Heart right ventricle (tissue), 16 donors: ENCODE measurements at regions of chr15 and their contacts with region 1.

Region 1: DNA sequence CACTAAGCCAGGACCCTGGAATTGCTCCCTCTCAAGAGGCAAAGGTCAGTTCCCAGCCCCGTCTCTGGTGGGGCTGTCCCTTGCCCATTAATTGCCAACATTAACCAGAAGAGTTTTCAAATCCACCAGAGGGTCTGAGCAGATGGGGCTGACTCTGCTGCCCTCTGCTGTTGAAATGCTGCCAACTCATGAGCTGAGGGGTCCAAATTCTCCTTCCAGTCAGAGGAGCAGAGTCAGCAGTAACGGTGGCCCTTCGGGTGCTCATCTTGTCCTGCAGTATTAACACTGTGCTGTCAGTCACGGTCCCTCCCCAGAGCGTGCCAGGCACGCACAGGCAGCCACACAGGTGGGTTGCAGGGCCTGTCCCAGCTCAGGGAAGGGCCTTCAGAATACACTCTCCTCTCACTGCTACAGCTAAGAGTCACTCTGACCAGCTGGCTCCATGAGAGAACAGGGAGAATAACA is 10.7 kb upstream of the SPTBN5 start:
- DNase-seq: peak in 1 of 2 donors; percentile 70
- ATAC-seq: peak; percentile 56 to 79 (median 69)
- H3K4me3 ChIP-seq: no peak overlapping the region
- H3K27ac ChIP-seq: peak overlapping the region in 9 of 10 donors; percentile 9 to 70 (median 48)
- H3K4me1 ChIP-seq: peaks cover 3 to 50% (median 37%) of the 10 kb centered on the region in 9 donors
- H3K27me3 ChIP-seq: no peaks in the 10 kb centered on the region
- CTCF ChIP-seq: peak; percentile 68 to 88 (median 85)

Region 2: DNA sequence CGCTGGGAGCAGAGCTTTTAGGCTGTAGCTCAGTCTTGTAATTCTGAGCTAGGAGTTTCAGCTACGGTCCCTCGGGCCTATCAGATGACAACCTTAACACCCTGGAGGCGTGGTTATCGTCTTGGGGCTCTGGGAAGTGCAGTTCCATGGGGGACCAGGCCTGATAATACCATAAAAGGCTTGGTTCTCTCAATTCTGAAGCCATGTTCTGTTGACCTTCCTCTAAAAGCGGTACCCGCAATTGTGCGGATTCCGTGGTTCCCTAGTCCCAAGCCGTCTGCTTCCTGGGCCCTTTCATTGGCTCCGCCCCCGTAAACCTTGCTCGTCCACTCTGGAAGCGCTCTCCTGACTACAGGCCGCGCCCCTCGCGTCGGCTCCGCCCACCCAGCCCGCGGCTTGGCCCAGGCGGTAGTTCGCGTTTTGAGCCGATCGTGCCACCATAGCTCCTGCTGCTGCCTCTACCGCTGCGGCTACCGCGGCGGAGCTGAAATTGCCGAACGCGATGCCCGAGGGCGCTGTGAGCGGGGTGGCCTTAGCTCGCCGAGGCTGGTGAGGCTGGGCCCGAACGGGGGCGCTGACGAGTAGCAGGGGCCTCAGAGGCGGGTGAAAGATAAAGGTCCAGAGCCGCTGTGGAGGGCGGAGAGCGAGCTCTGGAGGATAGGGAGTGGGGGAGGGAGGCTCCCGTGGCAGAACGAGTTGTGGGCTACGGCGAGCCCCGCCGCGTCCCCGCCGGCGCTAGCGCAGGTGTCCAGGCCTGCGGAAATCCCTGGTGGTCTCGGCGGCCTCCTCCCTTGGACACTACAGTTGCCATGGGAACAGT is 130.3 kb before region 1 on chr15 and contains the start of gene MAPKBP1:
- intact Hi-C with region 1: loop called in 5 of 10 experiments (anchors 2 to 10 kb)
- DNase-seq: peak; percentile 96 to 97
- ATAC-seq: peak; percentile 96 to 99 (median 98)
- H3K4me3 ChIP-seq: peak within 1 kb of the TSS; percentile 45 to 85 (median 77)
- H3K27ac ChIP-seq: peak within 1 kb of the TSS; percentile 52 to 88 (median 84)
- H3K4me1 ChIP-seq: peaks cover 13 to 55% (median 43%) of the 10 kb centered on the region in 9 donors
- H3K27me3 ChIP-seq: no peaks in the 10 kb centered on the region
- CTCF ChIP-seq: peak; percentile 29 to 84 (median 64)
- total RNA-seq, gene MAPKBP1: 8.3 to 17.0 (median 13.3) TPM

Region 3: GRCh38 chr15:41944313-41944940 is 39.9 kb after region 1 on chr15:
- intact Hi-C with region 1: no loop called
- DNase-seq: no peak
- ATAC-seq: peak in 7 of 8 donors; percentile 49 to 77 (median 70)
- H3K4me3 ChIP-seq: no peak overlapping the region
- H3K27ac ChIP-seq: peak overlapping the region; percentile 49 to 83 (median 78)
- H3K4me1 ChIP-seq: peaks cover 27 to 98% (median 89%) of the 10 kb centered on the region in 9 donors
- H3K27me3 ChIP-seq: no peaks in the 10 kb centered on the region
- CTCF ChIP-seq: no peak